ENCODE measurements at regions of chr1 and their contacts with region 1.

Region 1: GRCh38 chr1:43285269-43285990 is at the start of gene C1orf210:
- DNase-seq: peak; percentile 98
- ATAC-seq: peak; percentile 97
- H3K4me3 Mint-ChIP-seq: peak within 1 kb of the TSS; percentile 79
- H3K27ac Mint-ChIP-seq: peak within 1 kb of the TSS; percentile 94
- H3K4me1 Mint-ChIP-seq: peaks cover 34% of the 10 kb centered on the region
- H3K27me3 Mint-ChIP-seq: no peaks in the 10 kb centered on the region
- CTCF ChIP-seq: peak; percentile 39
- total RNA-seq, gene C1orf210: 11.7 to 14.0 TPM (median 12.8 TPM) in 3 replicates

Region 2: DNA sequence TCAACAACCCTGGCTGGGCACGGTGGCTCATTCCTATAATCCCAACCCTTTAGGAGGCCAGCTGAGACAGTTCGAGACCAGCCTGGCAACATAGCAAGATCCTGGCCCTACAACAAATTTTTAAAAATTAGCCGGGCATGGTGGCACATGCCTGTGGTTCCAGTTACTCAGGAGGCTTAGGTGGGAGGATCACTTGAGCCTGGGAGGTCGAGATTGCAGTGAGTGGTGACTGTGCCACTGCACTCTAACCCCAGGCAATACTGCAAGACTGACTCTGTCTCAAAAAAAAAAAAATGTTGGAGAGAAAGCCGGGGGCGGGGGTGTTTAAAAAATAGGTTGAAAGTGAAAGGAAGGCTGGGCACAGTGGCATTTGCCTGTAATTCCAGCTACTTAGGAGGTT is 561.9 kb before region 1 on chr1:
- CTCF ChIA-PET with region 1: no interaction called
- POLR2A ChIA-PET with region 1: no interaction called
- DNase-seq: no peak
- ATAC-seq: no peak
- H3K4me3 Mint-ChIP-seq: no peak overlapping the region
- H3K27ac Mint-ChIP-seq: no peak overlapping the region
- H3K4me1 Mint-ChIP-seq: peaks cover 5% of the 10 kb centered on the region; the same call in 1 of the 2 replicates
- H3K27me3 Mint-ChIP-seq: no peaks in the 10 kb centered on the region
- CTCF ChIP-seq: no peak

Region 3: DNA sequence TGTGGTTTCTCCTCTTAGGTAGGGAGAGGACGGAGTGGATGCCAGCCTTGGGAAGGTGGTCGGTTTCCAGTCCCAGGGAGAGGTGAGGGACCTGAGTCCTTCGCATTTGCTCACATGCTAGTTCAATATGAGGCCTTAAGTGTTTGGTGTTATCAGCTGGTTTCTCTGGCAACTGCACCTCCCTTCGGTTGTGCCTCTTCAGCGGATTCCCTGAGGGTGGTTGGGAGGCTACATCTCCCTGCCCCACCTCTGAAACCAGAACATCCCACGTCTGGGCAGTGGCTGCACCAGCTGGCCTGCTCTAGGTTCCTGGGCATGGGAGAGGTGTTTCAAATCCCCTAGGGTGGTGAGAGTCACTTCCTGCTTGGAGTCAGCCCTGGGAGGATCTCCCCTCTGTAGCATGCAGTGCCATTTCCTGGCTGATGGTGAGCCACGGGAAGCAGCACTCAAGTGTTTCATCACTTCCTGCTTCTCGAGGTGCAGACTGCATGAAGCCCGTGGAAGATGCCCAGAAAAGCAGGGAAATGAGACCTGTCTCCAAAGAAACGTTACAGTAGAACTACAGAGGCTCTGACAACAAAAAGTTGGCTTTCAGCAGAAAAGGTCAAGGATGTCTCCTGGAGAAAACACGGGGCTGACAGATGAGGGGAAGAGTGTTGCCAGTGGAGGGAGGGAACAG is 11.2 kb before region 1 on chr1:
- CTCF ChIA-PET with region 1: interaction called, 14 read pairs
- POLR2A ChIA-PET with region 1: interaction called, 16 read pairs
- DNase-seq: no peak
- ATAC-seq: no peak
- H3K4me3 Mint-ChIP-seq: no peak overlapping the region
- H3K27ac Mint-ChIP-seq: no peak overlapping the region
- H3K4me1 Mint-ChIP-seq: peaks cover 28% of the 10 kb centered on the region
- H3K27me3 Mint-ChIP-seq: no peaks in the 10 kb centered on the region
- CTCF ChIP-seq: no peak

Region 4: GRCh38 chr1:43300378-43301094 is 15.1 kb after region 1 on chr1 and contains the start of gene TIE1:
- CTCF ChIA-PET with region 1: interaction called, 21 read pairs
- POLR2A ChIA-PET with region 1: interaction called, 4 read pairs
- DNase-seq: no peak
- ATAC-seq: no peak
- H3K4me3 Mint-ChIP-seq: no peak within 1 kb of the TSS
- H3K27ac Mint-ChIP-seq: no peak within 1 kb of the TSS
- H3K4me1 Mint-ChIP-seq: peaks cover 33% of the 10 kb centered on the region
- H3K27me3 Mint-ChIP-seq: no peaks in the 10 kb centered on the region
- CTCF ChIP-seq: no peak
- total RNA-seq, gene TIE1: 2.5 to 3.7 TPM (median 2.6 TPM) in 3 replicates